ENCODE measurements at regions of chr9 and their contacts with region 1.

Region 1: GRCh38 chr9:137086531-137087408 is at the start of gene MAN1B1:
- DNase-seq: peak; percentile 100
- H3K4me3 Mint-ChIP-seq: peak within 1 kb of the TSS; percentile 88
- H3K27ac Mint-ChIP-seq: peak within 1 kb of the TSS; percentile 94
- H3K4me1 Mint-ChIP-seq: peaks cover 33% of the 10 kb centered on the region
- H3K27me3 Mint-ChIP-seq: no peaks in the 10 kb centered on the region
- total RNA-seq, gene MAN1B1: 48.1 and 53.6 TPM in 2 replicates

Region 2: DNA sequence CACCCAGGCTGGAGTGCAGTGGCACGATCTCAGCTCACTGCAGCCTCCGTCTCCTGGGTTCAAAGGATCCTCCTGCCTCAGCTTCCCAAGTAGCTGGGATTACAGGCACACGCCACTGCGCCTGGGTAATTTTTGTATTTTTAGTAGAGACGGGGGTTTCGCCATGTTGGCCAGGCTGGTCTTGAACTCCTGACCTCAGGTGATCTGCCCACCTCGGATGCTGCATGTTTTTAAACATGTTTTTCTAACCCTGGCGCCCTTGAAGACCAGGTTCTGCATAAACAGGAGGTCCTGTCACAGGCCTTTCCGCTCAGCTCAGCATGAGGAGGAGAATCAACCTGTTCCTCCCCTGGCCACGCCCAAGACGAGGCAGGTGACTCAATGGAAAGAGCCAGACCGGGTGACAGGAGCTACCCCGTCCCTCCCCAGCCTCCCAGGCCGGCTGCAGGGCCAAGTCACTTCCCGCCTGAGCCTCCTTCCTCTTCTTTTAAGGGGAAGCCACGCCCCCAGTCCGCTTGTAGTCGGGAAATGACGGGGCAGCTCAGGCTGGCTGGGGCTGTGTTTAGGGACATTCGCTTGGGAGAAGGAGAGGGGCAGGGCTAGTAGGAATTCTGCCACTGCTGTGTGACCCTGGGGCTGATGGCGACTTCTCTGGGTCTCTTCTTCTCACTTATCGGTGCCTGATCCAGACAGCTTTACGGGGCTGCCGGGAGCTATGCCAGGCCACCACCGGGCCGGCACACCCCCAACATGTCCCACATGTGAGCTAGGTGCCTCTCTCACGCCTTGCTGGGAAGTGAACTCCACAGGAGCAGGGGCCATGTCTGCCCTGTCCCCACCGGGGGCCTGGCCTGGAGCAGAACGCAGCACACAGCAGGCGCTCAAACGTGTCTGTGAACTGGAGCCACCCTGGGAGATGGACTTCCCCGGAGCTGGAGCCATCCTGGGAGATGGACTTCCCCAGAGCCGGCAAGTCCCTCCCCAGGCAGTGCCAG is 547.0 kb before region 1 on chr9:
- intact Hi-C with region 1: loop called (anchors 2 kb)
- DNase-seq: peak; percentile 91
- H3K4me3 Mint-ChIP-seq: peak overlapping the region; percentile 93
- H3K27ac Mint-ChIP-seq: peak overlapping the region; percentile 100
- H3K4me1 Mint-ChIP-seq: peaks cover 34% of the 10 kb centered on the region
- H3K27me3 Mint-ChIP-seq: no peaks in the 10 kb centered on the region

Region 3: GRCh38 chr9:136902259-136902821 is 184.4 kb before region 1 on chr9:
- intact Hi-C with region 1: loop called (anchors 5 kb)
- DNase-seq: peak; percentile 88
- H3K4me3 Mint-ChIP-seq: peak overlapping the region; percentile 80
- H3K27ac Mint-ChIP-seq: peak overlapping the region; percentile 99
- H3K4me1 Mint-ChIP-seq: peaks cover 63% of the 10 kb centered on the region
- H3K27me3 Mint-ChIP-seq: no peaks in the 10 kb centered on the region

Region 4: GRCh38 chr9:137046098-137046787 is 40.5 kb before region 1 on chr9 and contains the start of gene NPDC1:
- intact Hi-C with region 1: no loop called
- DNase-seq: peak; percentile 81
- H3K4me3 Mint-ChIP-seq: peak within 1 kb of the TSS; percentile 77
- H3K27ac Mint-ChIP-seq: peak within 1 kb of the TSS; percentile 44
- H3K4me1 Mint-ChIP-seq: peaks cover 5% of the 10 kb centered on the region
- H3K27me3 Mint-ChIP-seq: peaks cover 29% of the 10 kb centered on the region
- total RNA-seq, gene NPDC1: 78.2 and 80.1 TPM in 2 replicates

Region 5: GRCh38 chr9:137114610-137115391 is 28.0 kb after region 1 on chr9 and contains the start of gene DPP7:
- intact Hi-C with region 1: loop called (anchors 1 kb)
- DNase-seq: peak; percentile 76
- H3K4me3 Mint-ChIP-seq: peak within 1 kb of the TSS; percentile 82
- H3K27ac Mint-ChIP-seq: peak within 1 kb of the TSS; percentile 52
- H3K4me1 Mint-ChIP-seq: peaks cover 11% of the 10 kb centered on the region
- H3K27me3 Mint-ChIP-seq: no peaks in the 10 kb centered on the region
- total RNA-seq, gene DPP7: 371 and 394 TPM in 2 replicates

Measured in activated T-helper 1 cell treated with anti-CD3 and anti-CD28 coated beads, Interleukin-12 subunit alpha, Interleukin-12 subunit beta, Interleukin-2, Interleukin-4 antibody, amounts not matched to agents 30 ng/mL and 10 ng/mL and 1 ng/mL, durations not matched to agents 14 hours and 24 hours and 36 hours (primary cell).